Right ventricle myocardium inferior (tissue), 1 donor: ENCODE measurements at regions of chr6 and their contacts with region 1.

Region 1: DNA sequence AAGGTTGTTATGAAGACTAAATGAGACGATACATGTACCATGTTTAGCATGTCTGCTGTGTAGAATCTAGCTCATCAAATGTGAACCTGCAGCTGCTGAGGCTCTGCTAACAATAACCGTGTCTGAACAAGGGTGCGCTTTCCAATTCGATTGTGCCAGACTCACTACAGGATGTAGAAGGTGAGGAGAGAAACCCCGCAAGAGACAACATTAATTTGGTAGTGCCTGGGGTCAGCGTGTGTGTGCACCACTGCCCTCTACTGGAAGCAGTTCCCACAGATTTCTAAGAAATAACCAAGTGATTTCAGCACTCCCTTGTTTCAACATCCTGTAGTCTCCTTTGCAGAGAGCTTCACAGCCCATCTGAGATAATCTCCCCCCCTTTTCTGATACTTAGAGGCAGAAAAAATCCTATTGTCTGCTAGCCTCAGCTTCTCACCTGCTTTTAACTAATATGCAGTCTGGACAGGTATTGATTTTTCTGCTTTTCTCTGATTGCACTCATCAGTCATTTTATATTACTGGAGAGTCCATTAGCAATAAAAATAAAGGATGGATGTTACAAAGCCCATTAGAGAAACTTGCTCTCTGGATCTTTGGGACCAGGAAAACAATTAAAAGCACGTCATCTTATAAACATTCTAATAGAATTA is 96.7 kb upstream of the BACH2 start:
- DNase-seq: no peak
- ATAC-seq: peak; percentile 72

Region 2: DNA sequence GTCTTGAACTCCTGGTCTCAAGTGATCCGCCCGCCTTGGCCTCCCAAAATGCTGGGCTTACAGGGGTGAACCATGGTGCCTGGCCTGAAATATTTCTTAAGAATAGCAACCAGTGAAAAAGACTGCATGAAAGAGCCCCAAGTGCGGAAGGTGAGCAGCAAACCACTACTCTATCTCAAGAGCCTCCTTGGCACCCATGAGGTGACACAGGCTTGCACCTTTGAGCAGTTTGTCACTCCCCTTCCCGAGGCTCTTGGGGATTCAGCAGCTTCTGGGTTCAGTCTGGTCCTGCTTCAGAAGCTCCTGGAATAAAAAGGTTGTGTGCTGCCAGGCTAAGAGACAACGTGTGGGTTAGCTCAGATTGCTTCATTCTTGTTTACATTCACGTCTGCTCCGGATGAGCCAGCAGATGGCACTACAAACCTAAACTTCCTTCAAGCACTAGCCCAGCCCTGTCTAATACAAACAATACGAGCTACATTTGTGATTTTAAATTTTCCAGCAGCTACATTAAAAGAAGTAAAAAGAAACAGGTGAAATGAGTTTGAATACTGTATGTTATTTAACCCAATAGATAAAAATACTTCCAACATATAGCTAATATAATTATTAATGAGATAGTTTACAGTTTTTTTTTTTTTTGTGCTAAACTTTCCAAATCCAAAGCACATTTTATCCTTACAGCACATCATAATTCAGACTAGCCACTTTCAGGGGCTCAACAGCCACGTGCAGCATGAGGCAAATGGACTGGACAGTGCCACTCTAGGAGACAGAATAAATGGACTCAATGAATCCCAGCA is 452.9 kb before region 1 on chr6:
- intact Hi-C with region 1: loop called (anchors 10 kb)
- DNase-seq: no peak
- ATAC-seq: peak; percentile 80

Region 3: GRCh38 chr6:90098001-90098531 is 295.3 kb before region 1 on chr6:
- intact Hi-C with region 1: loop called (anchors 2 kb)
- DNase-seq: no peak
- ATAC-seq: peak; percentile 92

Region 4: GRCh38 chr6:90434094-90434493 is 40.7 kb after region 1 on chr6:
- intact Hi-C with region 1: no loop called
- DNase-seq: no peak
- ATAC-seq: no peak

Region 5: GRCh38 chr6:90484903-90485302 is 91.5 kb after region 1 on chr6:
- intact Hi-C with region 1: no loop called
- DNase-seq: no peak
- ATAC-seq: no peak